Endothelial cell of umbilical vein (primary cell): ENCODE measurements at regions of chr9 and their contacts with region 1.

Region 1: DNA sequence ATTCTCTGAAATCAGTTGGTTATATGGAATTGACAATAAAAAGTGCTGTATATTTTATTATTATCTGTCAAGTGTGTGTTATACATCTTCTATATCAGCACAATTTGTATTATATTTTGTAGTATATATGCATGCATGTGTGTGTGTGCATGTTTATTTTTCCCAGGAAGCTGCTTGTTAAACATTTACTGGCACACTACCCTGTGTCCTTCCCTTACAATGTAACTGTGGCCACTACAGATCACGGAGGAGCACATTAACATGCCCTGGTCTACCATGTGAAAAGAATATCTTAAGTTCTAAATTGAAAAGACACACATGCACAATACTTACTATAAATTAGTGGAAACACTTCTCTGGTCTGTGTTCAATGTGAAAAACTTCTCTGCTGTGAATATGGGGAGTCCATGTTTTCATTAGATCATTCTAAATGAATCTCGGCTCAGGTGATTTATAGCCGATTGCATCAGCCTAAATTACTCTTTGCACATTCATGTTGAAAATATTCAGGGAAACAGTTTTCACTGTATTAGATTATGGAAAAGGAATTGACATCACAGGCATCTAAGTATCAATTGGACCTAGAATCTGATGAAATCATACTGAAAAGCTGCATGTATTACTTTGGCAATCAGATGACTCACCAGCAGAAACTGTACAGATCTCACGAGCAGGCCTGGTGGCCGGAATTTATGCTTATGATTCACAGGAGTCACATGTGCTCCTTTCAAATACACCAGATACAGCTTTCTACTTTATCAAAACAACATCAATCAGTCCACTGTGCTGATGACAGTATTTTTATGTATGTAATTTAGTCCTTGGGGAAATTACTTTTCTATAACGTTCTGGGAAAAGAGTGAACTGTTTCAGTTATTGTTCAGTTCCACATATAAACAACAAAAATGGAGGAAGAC is 39.4 kb downstream of the LURAP1L start:
- DNase-seq: peak; percentile 99
- H3K4me3 ChIP-seq: peak overlapping the region in 2 of 3 experiments; percentile 11 to 75
- H3K27ac ChIP-seq: peak overlapping the region; percentile 99
- H3K4me1 ChIP-seq: peaks cover 23% of the 10 kb centered on the region
- H3K27me3 ChIP-seq: no peaks in the 10 kb centered on the region
- CTCF ChIP-seq: peak; percentile 3 to 22
- POLR2A ChIP-seq: no peak

Region 2: DNA sequence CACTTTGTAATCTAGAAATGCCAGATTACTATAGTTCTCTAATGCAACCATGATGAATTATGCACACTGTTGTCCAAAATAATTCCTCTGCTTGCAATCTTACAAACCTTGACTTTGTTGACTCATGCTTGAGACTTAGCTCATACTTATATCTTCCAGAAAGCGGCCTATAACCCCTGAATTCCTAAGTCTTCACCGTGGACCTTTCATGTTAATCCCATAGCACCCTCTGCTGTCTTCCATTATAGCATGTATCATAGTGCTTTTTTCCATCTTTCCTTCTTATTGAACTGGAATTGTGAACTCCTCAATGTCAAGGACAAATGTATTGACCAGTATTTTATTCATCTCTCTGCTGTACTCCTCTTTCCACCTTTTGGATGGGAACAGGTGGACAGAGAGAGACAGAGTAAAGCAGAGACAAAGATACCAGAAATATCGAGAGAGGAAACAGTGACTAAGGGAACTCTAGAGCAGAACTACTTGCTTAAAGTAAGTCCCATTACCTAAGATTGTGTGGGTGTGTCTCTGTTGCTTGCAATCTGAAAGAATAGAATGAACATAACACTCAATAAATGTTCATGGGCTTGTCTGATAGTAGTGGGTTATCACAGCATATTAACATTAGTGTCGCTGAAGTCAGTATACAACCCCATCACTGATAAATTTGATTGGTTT is 70.7 kb after region 1 on chr9:
- CTCF ChIA-PET with region 1: interaction called, 16 read pairs
- POLR2A ChIA-PET with region 1: no interaction called
- dilution Hi-C with region 1: no loop called
- intact Hi-C with region 1: loop called (anchors 2 kb)
- DNase-seq: peak; percentile 64
- H3K4me3 ChIP-seq: no peak overlapping the region
- H3K27ac ChIP-seq: no peak overlapping the region
- H3K4me1 ChIP-seq: no peaks in the 10 kb centered on the region
- H3K27me3 ChIP-seq: no peaks in the 10 kb centered on the region
- CTCF ChIP-seq: peak; percentile 22 to 32
- POLR2A ChIP-seq: no peak

Region 3: GRCh38 chr9:13267743-13268142 is 453.5 kb after region 1 on chr9:
- CTCF ChIA-PET with region 1: no interaction called
- POLR2A ChIA-PET with region 1: no interaction called
- dilution Hi-C with region 1: no loop called
- intact Hi-C with region 1: loop called (anchors 2 kb)
- DNase-seq: peak; percentile 97
- H3K4me3 ChIP-seq: peak overlapping the region in 1 of 3 experiments; percentile 48
- H3K27ac ChIP-seq: peak overlapping the region; percentile 88
- H3K4me1 ChIP-seq: peaks cover 62% of the 10 kb centered on the region
- H3K27me3 ChIP-seq: no peaks in the 10 kb centered on the region
- CTCF ChIP-seq: no peak
- POLR2A ChIP-seq: peak; percentile 69

Region 4: DNA sequence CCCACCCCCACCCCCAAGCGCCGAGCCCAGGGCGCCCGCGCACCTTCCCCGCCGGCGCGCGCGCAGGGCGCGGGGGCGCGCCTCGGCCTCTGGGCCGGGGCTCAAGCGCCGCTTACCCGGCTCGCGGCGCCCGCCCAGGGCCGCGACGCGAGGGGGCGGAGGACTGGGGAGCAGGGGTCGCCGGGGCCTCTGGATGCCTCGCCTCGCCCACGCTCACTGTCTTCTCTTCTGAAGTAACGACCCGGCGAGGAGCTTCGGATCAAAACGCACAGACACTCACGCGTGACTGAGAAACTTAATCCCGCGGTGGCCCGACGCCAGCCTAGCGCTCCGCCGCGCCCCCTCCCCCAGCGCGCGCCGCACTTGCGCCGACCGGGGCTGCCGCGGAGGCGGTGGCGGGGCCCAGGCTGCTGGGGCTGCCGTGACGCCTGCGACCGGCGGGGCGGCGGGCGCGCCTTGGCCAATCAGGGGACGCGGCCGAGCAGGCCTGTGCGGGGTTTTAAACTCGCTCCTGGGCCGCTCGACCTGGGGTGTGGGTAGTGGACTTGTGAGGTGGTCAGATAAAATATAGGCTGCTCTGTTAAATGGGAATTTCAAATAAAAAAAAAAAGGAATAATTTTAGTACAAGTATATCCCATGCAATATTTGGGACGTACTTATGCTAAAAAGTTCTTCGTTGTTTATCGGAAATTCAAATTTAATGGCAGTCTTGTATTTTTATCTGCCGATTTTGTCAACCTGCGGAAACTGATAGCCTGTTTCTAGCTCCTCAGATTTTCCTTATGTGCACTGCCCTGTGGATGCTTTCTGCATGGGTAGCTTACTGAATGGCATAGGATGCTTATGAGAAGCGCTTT is 465.3 kb after region 1 on chr9 and contains the start of gene MPDZ:
- CTCF ChIA-PET with region 1: no interaction called
- POLR2A ChIA-PET with region 1: no interaction called
- dilution Hi-C with region 1: no loop called
- intact Hi-C with region 1: no loop called
- DNase-seq: peak; percentile 81
- H3K4me3 ChIP-seq: peak within 1 kb of the TSS; percentile 22 to 74 (median 74)
- H3K27ac ChIP-seq: peak within 1 kb of the TSS; percentile 91
- H3K4me1 ChIP-seq: peaks cover 25% of the 10 kb centered on the region
- H3K27me3 ChIP-seq: no peaks in the 10 kb centered on the region
- CTCF ChIP-seq: no peak
- POLR2A ChIP-seq: peak; percentile 28
- total RNA-seq, gene MPDZ: 52.3 and 54.4 TPM in 2 replicates